ENCODE measurements at regions of chr10 and their contacts with region 1.

Region 1: DNA sequence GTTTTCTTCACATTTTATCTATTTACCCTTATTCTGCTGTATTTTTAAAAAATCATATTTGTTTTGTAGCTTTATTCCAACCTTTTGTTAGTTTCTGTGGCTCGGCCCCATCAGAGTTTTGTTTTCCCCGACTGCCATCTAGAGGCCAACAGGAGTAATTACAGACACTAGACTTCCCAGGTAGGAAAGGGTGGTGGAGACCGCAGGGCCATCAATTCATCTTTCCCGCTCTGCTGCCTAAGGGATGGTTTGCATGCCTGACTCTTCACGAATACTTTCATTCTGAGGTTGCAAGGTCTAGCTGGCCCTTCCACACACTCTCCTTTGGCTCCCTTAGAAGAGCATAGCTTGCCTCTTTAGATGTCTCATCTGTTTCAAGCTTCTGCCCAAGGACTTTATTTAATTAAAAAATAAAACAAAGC is 38.3 kb downstream of the LYZL2 start:
- DNase-seq: peak; percentile 33 to 36
- H3K4me3 ChIP-seq: no peak overlapping the region
- H3K27ac ChIP-seq: no peak overlapping the region
- H3K4me1 ChIP-seq: no peaks in the 10 kb centered on the region
- H3K27me3 ChIP-seq: no peaks in the 10 kb centered on the region
- CTCF ChIP-seq: peak; percentile 76

Region 2: GRCh38 chr10:28628184-28628893 is 1962.9 kb before region 1 on chr10:
- CTCF ChIA-PET with region 1: interaction called, 12 read pairs
- POLR2A ChIA-PET with region 1: no interaction called
- intact Hi-C with region 1: no loop called
- DNase-seq: peak; percentile 51 to 74
- H3K4me3 ChIP-seq: no peak overlapping the region
- H3K27ac ChIP-seq: no peak overlapping the region
- H3K4me1 ChIP-seq: peaks cover 7% of the 10 kb centered on the region; the same call in 1 of the 2 replicates
- H3K27me3 ChIP-seq: no peaks in the 10 kb centered on the region
- CTCF ChIP-seq: peak; percentile 91

Region 3: DNA sequence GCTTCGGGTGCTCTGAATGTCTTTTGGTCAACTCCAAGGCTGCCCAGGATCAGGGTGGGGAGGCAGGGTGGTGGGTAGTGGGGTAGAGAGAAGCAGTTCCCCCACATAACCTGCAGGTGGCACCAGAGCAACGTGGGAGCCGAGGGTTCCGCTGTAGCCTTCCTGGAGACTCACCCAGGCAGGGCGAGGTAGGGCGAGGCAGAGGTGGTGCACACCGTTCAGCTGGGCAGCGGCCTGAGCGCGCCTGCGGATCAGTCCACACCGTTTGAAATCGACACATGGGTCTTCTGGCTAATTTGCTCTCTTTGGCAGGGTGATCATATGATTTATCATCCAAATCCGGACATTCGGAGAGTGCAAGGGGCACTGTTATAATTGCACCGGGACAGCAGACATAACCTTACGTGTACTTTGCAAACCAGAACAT is 198.7 kb before region 1 on chr10:
- CTCF ChIA-PET with region 1: interaction called, 5 read pairs
- POLR2A ChIA-PET with region 1: no interaction called
- intact Hi-C with region 1: loop called (anchors 1 kb)
- DNase-seq: peak in 1 of 2 experiments; percentile 72
- H3K4me3 ChIP-seq: no peak overlapping the region
- H3K27ac ChIP-seq: no peak overlapping the region
- H3K4me1 ChIP-seq: no peaks in the 10 kb centered on the region
- H3K27me3 ChIP-seq: no peaks in the 10 kb centered on the region
- CTCF ChIP-seq: peak; percentile 87

Region 4: DNA sequence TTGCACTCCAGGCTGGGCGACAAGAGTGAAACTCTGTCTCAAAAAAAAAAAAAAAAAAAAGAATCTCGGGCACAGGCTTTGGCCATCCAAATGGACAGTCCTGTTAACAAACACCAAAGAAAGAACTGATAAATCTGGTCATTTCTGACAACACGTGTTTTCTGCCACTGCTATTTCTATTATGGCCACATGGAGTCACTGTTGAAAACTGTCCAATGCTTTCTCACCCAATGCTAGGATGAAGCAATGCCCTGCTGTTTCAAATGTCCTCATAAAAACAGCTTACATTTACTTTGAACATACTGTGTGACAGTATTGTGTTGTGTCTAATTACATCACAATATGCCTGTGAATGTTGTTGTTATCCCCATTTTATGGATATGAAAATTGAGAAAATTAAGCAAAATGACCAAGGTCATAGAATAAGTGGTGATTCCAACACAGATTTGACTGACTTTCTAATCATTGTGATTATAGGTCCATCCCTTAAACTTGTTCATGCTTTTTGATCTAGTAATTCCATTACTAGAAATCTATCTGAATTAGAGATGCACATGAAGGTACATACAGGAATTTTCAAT is 177.2 kb before region 1 on chr10:
- CTCF ChIA-PET with region 1: interaction called, 4 read pairs
- POLR2A ChIA-PET with region 1: no interaction called
- intact Hi-C with region 1: loop called (anchors 1 kb)
- DNase-seq: peak; percentile 25 to 63
- H3K4me3 ChIP-seq: no peak overlapping the region
- H3K27ac ChIP-seq: no peak overlapping the region
- H3K4me1 ChIP-seq: peaks cover 13% of the 10 kb centered on the region
- H3K27me3 ChIP-seq: no peaks in the 10 kb centered on the region
- CTCF ChIP-seq: peak; percentile 74

Region 5: DNA sequence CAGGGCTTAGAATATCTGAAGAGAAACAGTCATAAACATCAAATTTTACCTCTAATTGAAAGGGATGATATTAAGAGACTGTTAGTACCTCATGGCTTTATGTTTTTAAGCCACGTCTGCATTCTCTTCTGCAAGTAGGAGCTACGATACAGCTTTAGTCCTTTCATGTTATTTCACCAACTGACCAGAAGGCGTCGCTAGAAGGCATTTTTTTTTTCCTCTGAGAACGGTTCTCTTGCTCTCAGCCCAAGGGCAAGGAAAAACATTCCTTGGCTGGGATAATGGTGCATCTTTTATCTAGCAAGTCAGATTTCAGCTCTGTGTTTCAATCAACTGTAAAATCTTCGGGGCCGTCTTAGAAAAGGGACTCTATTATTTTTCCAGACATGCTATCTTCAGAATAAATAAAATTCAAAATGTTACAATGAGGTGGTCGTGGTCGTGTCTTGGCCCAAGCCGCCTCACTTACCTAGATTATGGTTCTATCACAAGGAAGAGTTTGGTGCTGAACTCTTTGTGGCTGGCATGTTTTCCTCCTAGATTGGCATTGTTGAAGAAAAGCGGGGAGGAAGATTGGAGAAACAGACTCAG is 79.9 kb after region 1 on chr10:
- CTCF ChIA-PET with region 1: no interaction called
- POLR2A ChIA-PET with region 1: no interaction called
- intact Hi-C with region 1: no loop called
- DNase-seq: peak; percentile 33 to 39
- H3K4me3 ChIP-seq: peak overlapping the region; percentile 26; the same call in 1 of the 2 replicates
- H3K27ac ChIP-seq: no peak overlapping the region
- H3K4me1 ChIP-seq: no peaks in the 10 kb centered on the region
- H3K27me3 ChIP-seq: no peaks in the 10 kb centered on the region
- CTCF ChIP-seq: peak; percentile 80